ENCODE measurements at regions of chr12 and their contacts with region 1.

Region 1: GRCh38 chr12:105420659-105421240 is 90.3 kb downstream of the C12orf75 start:
- DNase-seq: peak; percentile 39 to 53 (median 46)
- H3K4me3 ChIP-seq: no peak overlapping the region
- H3K4me3 Mint-ChIP-seq: no peak overlapping the region
- H3K27ac ChIP-seq: no peak overlapping the region
- H3K27ac Mint-ChIP-seq: no peak overlapping the region
- H3K4me1 ChIP-seq: no peaks in the 10 kb centered on the region
- H3K4me1 Mint-ChIP-seq: peaks cover 0 to 1% (median under 1%) of the 10 kb centered on the region in 4 donors
- H3K27me3 ChIP-seq: no peaks in the 10 kb centered on the region
- H3K27me3 Mint-ChIP-seq: peaks cover 2 to 3% of the 10 kb centered on the region in 2 donors

Region 2: DNA sequence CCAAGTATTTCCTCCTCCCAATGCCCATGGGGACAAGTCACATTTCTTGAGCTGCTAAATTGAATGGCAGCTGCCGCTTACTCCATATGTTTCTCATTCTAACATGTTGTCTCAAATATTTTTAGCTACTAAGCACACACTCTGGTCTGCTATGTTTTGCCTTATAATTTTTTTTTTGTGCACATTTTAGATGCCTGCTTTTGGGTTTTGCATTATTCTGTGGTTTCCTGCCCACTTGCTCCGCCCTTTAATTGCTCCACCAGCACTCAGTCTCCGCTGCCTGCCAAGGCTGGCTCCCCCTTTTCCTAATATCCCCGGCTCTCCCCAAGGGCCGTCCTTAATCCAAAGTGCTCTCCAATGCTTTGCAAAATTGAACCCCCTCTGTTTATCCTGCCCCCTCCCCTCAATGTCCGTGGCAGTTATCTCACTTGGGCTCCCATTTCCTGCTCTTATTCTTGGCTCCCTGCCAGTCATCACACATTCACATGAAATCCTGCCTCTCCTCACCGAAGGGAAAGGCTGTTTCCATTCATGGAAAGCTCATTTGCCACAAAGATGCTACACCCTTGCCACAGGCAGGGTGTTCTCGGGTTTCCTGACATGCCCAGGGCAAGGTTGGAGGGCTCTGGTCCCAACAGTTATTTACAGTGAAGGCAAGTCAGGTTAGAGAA is 10.8 kb before region 1 on chr12:
- CTCF ChIA-PET with region 1: interaction called, 10 read pairs
- POLR2A ChIA-PET with region 1: no interaction called
- intact Hi-C with region 1: no loop called
- DNase-seq: peak in 3 of 5 donors; percentile 5 to 22 (median 12)
- H3K4me3 ChIP-seq: no peak overlapping the region
- H3K4me3 Mint-ChIP-seq: peak overlapping the region; percentile 71 to 92 (median 80)
- H3K27ac ChIP-seq: no peak overlapping the region
- H3K27ac Mint-ChIP-seq: peak overlapping the region in 3 of 7 donors; percentile 54 to 67 (median 55)
- H3K4me1 ChIP-seq: peaks cover 15% of the 10 kb centered on the region
- H3K4me1 Mint-ChIP-seq: peaks cover 11 to 21% (median 16%) of the 10 kb centered on the region in 4 donors
- H3K27me3 ChIP-seq: no peaks in the 10 kb centered on the region
- H3K27me3 Mint-ChIP-seq: peaks cover 0 to 3% of the 10 kb centered on the region in 2 donors

Measured in CD4-positive, alpha-beta memory T cell (primary cell).